ENCODE measurements at regions of chr2 and their contacts with region 1.

Region 1: GRCh38 chr2:170928824-170929685 is at the start of gene GORASP2:
- DNase-seq: peak; percentile 93 to 100 (median 97)
- ATAC-seq: peak; percentile 90
- H3K4me3 ChIP-seq: peak within 1 kb of the TSS; percentile 78 to 92
- H3K4me3 Mint-ChIP-seq: peak within 1 kb of the TSS; percentile 98
- H3K27ac ChIP-seq: peak within 1 kb of the TSS; percentile 68 to 80
- H3K27ac Mint-ChIP-seq: peak within 1 kb of the TSS; percentile 97
- H3K4me1 ChIP-seq: peaks cover 30% of the 10 kb centered on the region
- H3K4me1 Mint-ChIP-seq: peaks cover 35% of the 10 kb centered on the region
- H3K27me3 ChIP-seq: no peaks in the 10 kb centered on the region
- H3K27me3 Mint-ChIP-seq: no peaks in the 10 kb centered on the region
- CTCF ChIP-seq: peak; percentile 93
- total RNA-seq, gene GORASP2: 111 to 112 TPM

Region 2: DNA sequence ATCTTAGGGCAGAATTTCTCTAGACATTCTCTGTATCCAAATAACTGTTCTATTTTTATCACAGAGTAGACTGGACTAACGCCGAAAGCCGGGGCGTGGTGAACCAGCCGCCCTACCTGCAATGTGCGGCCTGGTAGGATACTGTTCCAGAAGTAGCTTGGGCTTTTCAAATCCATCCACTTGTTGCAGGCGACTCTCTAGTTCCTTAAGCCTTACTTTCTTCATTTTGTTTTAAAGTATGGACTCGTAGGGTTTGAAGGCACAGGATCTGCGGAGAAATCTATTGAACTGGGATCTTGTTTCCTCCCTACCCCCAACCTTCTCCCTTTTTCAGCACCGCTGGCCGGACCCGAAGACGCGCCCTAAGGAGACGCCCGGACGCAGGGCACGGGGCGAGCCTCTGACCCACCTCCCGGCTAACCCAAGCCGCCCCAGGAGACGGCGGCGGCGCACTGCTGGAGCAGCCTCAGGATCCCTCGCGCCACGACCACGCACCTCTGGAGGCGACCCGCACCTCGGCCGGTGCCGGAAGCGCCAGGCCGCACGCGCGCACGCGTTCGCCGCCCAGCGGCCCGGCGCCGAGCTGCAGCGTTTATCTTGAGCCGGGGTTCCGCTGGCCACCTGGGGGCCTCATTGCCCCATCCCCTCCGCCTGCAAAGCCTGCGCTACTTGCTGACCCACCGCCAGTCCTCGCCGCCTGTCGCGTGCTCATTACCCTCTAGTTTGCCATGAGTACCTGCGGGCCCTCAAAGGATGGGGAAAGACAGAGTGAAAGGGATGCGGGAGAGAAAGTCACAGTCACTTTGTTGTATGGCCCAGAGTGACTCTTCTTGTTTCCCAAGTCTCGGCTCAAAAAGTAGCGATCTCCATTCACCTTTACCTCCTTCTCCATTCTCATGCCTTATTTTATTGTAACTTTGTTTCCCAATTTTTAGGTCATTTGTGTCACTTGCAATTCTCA is 1104.4 kb before region 1 on chr2 and contains the start of gene METTL5:
- CTCF ChIA-PET with region 1: no interaction called
- POLR2A ChIA-PET with region 1: no interaction called
- intact Hi-C with region 1: loop called (anchors 10 kb)
- DNase-seq: peak; percentile 55 to 87 (median 73)
- ATAC-seq: peak; percentile 61
- H3K4me3 ChIP-seq: peak within 1 kb of the TSS; percentile 87
- H3K4me3 Mint-ChIP-seq: peak within 1 kb of the TSS; percentile 95
- H3K27ac ChIP-seq: peak within 1 kb of the TSS; percentile 59 to 72
- H3K27ac Mint-ChIP-seq: peak within 1 kb of the TSS; percentile 92
- H3K4me1 ChIP-seq: peaks cover 37% of the 10 kb centered on the region
- H3K4me1 Mint-ChIP-seq: peaks cover 61% of the 10 kb centered on the region
- H3K27me3 ChIP-seq: no peaks in the 10 kb centered on the region
- H3K27me3 Mint-ChIP-seq: no peaks in the 10 kb centered on the region
- CTCF ChIP-seq: peak; percentile 93
- total RNA-seq, gene METTL5: 13.7 to 15.8 TPM

Region 3: GRCh38 chr2:170973492-170974303 is 44.6 kb after region 1 on chr2:
- CTCF ChIA-PET with region 1: interaction called, 22 read pairs
- POLR2A ChIA-PET with region 1: interaction called, 8 read pairs
- intact Hi-C with region 1: loop called (anchors 1 kb)
- DNase-seq: peak; percentile 72 to 94 (median 87)
- ATAC-seq: peak; percentile 97
- H3K4me3 ChIP-seq: peak overlapping the region; percentile 75 to 88
- H3K4me3 Mint-ChIP-seq: peak overlapping the region; percentile 85
- H3K27ac ChIP-seq: peak overlapping the region; percentile 36 to 59
- H3K27ac Mint-ChIP-seq: peak overlapping the region; percentile 83
- H3K4me1 ChIP-seq: peaks cover 11% of the 10 kb centered on the region
- H3K4me1 Mint-ChIP-seq: peaks cover 7% of the 10 kb centered on the region
- H3K27me3 ChIP-seq: no peaks in the 10 kb centered on the region
- H3K27me3 Mint-ChIP-seq: no peaks in the 10 kb centered on the region
- CTCF ChIP-seq: peak; percentile 74

Region 4: GRCh38 chr2:171416009-171416926 is 487.2 kb after region 1 on chr2:
- CTCF ChIA-PET with region 1: interaction called, 8 read pairs
- POLR2A ChIA-PET with region 1: interaction called, 9 read pairs
- intact Hi-C with region 1: loop called (anchors 1 kb)
- DNase-seq: peak; percentile 44 to 85 (median 79)
- ATAC-seq: peak; percentile 98
- H3K4me3 ChIP-seq: no peak overlapping the region
- H3K4me3 Mint-ChIP-seq: no peak overlapping the region
- H3K27ac ChIP-seq: no peak overlapping the region
- H3K27ac Mint-ChIP-seq: peak overlapping the region; percentile 1
- H3K4me1 ChIP-seq: no peaks in the 10 kb centered on the region
- H3K4me1 Mint-ChIP-seq: peaks cover 10% of the 10 kb centered on the region
- H3K27me3 ChIP-seq: no peaks in the 10 kb centered on the region
- H3K27me3 Mint-ChIP-seq: no peaks in the 10 kb centered on the region
- CTCF ChIP-seq: peak; percentile 65

Region 5: DNA sequence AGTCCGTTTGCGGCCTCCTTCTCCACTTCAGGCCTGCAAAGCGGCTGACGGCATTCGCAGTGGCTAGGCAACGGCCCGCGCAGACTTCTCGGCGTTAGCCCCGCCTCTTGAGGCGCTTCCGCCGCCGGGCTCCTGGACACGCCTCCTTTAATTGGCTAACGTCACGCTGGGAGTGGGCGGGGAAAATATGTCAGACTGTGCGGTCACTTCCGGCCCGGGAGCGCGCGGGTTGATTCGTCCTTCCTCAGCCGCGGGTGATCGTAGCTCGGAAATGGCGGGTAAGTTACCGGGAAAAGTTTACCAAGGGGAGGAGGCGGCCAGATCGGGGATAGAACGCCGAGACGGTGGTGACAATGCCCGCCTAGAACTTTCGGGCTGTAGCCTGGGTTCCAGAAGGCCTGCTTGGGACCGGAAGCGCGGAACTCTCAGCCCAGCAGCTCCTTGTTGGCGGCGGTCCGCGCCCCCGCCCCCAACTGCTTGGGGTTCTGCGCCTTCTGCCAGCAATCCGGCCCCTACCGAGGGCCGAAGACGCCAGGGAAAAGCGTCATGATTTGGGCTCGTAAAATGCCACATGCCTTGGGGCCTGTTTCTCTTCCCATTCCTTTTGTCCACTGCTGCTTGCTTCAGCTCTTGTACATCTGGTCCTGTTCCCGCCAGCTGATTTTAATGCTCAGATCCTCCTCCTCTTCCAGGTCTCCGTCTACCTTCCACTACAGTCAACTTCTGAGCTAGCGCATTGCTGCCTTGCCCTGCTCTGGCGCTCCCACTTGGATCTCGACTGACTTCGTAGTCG is 993.4 kb after region 1 on chr2 and contains the start of gene HAT1:
- CTCF ChIA-PET with region 1: no interaction called
- POLR2A ChIA-PET with region 1: no interaction called
- intact Hi-C with region 1: loop called in 1 of 2 experiments (anchors 1 kb)
- DNase-seq: peak; percentile 94 to 99 (median 97)
- ATAC-seq: peak; percentile 98
- H3K4me3 ChIP-seq: peak within 1 kb of the TSS; percentile 82 to 97
- H3K4me3 Mint-ChIP-seq: peak within 1 kb of the TSS; percentile 98
- H3K27ac ChIP-seq: peak within 1 kb of the TSS; percentile 94 to 96
- H3K27ac Mint-ChIP-seq: peak within 1 kb of the TSS; percentile 97
- H3K4me1 ChIP-seq: peaks cover 21% of the 10 kb centered on the region
- H3K4me1 Mint-ChIP-seq: peaks cover 45% of the 10 kb centered on the region
- H3K27me3 ChIP-seq: no peaks in the 10 kb centered on the region
- H3K27me3 Mint-ChIP-seq: no peaks in the 10 kb centered on the region
- CTCF ChIP-seq: no peak
- total RNA-seq, gene HAT1: 29.5 to 30.2 TPM